ENCODE measurements at regions of chr3 and their contacts with region 1.

Region 1: GRCh38 chr3:146065573-146066006 is 95.4 kb downstream of the PLOD2 start:
- DNase-seq: no peak
- H3K27ac ChIP-seq: no peak overlapping the region
- CTCF ChIP-seq: peak; percentile 72

Region 2: DNA sequence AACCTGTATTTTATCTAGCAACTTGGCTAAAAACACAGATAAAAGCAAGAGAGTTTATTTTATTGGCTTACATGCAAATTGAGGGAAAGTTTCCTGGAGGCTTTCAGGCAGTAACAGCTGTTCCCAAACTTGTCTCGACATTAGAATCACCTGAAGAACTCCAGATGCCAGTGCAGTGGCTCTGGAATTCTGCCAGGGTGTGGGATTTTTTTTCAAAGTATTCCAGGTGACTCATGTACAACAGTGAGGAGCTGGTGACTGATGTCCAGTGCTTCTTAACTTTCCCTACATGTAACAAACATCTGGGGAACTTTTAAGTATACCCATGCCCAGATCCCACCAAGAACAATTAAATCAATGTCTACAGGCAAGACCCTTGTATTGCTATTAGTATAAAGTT is 119.0 kb after region 1 on chr3:
- CTCF ChIA-PET with region 1: interaction called, 42 read pairs
- POLR2A ChIA-PET with region 1: no interaction called
- DNase-seq: peak; percentile 54
- H3K27ac ChIP-seq: no peak overlapping the region
- CTCF ChIP-seq: no peak

Region 3: GRCh38 chr3:146189519-146190173 is 124.1 kb after region 1 on chr3:
- CTCF ChIA-PET with region 1: interaction called, 42 read pairs
- POLR2A ChIA-PET with region 1: no interaction called
- DNase-seq: peak; percentile 63
- H3K27ac ChIP-seq: no peak overlapping the region
- CTCF ChIP-seq: peak; percentile 80